Aorta (tissue), 5 donors: ENCODE measurements at regions of chr9 and their contacts with region 1.

Region 1: DNA sequence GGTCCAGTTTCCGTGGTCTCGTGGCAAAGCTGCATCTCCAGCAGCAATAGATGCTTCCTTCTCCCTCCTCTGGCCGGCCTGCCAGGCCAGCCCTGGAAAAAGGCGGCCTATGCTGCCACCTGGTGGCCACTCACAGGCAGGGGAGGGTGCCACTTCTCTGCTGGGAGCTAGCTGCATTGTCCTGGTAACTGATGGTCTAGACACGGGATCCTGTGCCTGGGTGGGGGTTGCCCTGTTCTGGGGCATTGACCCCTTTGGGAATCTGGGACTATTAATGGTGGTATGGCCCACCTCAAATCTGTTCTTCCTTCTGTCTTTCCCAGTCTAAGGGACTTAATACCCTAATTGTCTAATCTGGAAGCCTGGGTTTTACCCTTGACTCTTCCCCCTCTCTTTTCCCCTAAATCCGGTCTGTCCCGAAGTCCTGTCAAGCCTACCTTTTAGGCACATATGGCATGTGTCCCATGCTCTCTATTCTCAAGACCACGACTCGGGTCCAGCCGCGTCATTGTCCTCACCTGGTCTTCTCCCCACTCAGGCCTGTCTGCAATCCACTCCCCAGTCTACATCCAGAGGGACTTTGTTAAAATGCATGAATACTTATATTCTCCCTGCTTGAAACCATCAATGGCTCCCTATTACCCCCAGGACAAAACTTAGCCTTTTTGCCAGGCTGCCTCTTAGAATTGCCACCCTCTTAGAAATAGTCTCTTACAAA is 20.0 kb upstream of the PTGS1 start:
- DNase-seq: peak; percentile 87 to 94
- ATAC-seq: peak; percentile 86
- H3K4me3 ChIP-seq: no peak overlapping the region
- H3K27ac ChIP-seq: no peak overlapping the region
- H3K4me1 ChIP-seq: no peaks in the 10 kb centered on the region
- H3K27me3 ChIP-seq: no peaks in the 10 kb centered on the region

Region 2: DNA sequence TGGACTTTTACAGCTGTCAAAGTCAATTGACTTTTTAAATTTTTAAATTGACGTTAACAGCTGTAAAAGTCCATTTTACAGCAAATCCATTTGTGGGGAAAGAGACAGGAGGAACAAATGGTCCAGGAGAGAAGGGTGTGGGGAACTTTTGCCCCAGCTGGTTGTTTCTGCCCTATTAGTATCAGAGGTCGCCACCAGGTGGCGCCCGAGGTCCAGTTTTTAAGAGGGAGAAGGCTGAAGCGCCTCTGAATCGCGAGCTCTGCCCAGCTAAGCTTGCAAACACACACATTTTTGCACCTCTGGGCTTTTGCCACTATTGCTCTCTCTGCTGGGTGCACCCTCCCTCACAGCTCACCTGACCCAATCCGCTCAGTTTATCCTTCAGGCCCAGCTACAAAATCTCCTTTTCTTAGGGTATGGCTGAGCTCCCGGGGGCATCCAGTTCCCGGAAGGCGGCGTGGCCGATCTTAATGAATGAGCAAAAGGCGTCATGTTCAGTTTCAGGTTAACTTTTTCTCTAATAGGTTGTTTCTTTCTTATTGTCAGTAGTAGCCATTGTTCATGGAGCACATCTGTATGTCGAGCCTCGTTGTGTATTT is 251.4 kb before region 1 on chr9:
- intact Hi-C with region 1: loop called (anchors 1 kb)
- DNase-seq: peak; percentile 87 to 94
- ATAC-seq: peak; percentile 87
- H3K4me3 ChIP-seq: no peak overlapping the region
- H3K27ac ChIP-seq: no peak overlapping the region
- H3K4me1 ChIP-seq: no peaks in the 10 kb centered on the region
- H3K27me3 ChIP-seq: no peaks in the 10 kb centered on the region

Region 3: DNA sequence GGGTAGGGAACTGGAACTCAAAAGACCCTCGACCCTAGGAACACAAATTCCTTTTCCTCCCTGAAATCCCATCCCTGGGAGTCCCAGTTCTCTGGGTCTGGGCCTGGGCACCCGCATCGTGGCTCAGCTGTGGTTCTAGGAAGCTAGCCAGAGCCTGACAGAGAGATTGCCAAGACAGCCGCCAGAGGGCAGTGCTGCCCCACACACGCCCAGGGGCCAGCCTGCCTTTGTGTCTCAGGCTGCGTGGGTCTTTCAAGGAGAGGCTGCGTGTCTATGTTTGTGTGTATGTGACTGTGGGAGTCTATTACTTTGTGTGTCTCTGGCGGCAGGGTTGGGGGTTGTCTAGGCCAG is 225.7 kb before region 1 on chr9:
- intact Hi-C with region 1: loop called (anchors 1 to 2 kb)
- DNase-seq: peak; percentile 85 to 93
- ATAC-seq: peak; percentile 80
- H3K4me3 ChIP-seq: no peak overlapping the region
- H3K27ac ChIP-seq: no peak overlapping the region
- H3K4me1 ChIP-seq: no peaks in the 10 kb centered on the region
- H3K27me3 ChIP-seq: no peaks in the 10 kb centered on the region

Region 4: DNA sequence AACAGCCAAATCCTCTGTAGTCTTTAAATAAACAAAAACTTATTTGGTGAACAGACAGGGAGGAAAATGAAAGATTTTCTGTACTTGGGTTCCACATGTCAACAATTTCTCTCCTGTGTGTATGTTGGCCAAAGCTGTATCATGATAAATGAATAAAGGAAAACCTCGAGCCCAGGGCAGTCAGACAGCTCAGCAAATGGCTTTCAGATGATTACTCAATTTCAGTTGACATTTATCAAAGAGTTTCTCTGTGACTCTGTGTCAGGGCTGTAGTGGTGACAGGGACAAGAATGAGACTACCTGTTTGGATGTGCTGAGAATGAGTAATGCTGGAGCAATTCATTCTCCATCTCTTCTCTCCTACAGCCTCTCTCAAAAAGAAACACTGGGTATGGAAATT is 25.7 kb before region 1 on chr9:
- intact Hi-C with region 1: no loop called
- DNase-seq: no peak
- ATAC-seq: no peak
- H3K4me3 ChIP-seq: no peak overlapping the region
- H3K27ac ChIP-seq: no peak overlapping the region
- H3K4me1 ChIP-seq: peaks cover 0 to 2% of the 10 kb centered on the region in 2 donors
- H3K27me3 ChIP-seq: no peaks in the 10 kb centered on the region

Region 5: GRCh38 chr9:122453677-122454135 is 102.9 kb after region 1 on chr9:
- intact Hi-C with region 1: loop called in 1 of 2 experiments (anchors 10 kb)
- DNase-seq: no peak
- ATAC-seq: no peak
- H3K4me3 ChIP-seq: no peak overlapping the region
- H3K27ac ChIP-seq: no peak overlapping the region
- H3K4me1 ChIP-seq: no peaks in the 10 kb centered on the region
- H3K27me3 ChIP-seq: peaks cover 0 to 2% of the 10 kb centered on the region in 2 donors